Psoas muscle (tissue), 8 donors: ENCODE measurements at regions of chr4 and their contacts with region 1.

Region 1: DNA sequence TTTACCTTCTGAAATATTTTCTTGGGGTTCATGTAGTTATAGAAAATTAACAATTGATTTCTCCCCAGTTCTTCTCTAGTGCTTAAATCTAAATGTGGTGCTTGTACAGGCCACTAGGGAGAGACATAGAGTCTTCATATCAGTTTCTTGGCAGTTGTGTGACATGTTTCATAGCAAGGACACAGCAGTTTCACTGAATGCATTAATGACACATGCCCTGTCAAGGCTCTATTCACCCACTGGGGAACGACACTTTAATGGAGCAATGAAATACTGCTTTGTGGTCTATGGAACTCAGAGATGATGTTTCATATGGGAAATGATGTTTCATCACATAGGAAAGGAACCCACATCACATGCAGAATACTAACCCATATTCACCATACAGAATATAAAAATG is 2.8 kb downstream of the VEGFC start:
- DNase-seq: no peak
- ATAC-seq: peak; percentile 69 to 84 (median 78)
- H3K4me3 ChIP-seq: peak overlapping the region; percentile 82
- H3K27ac ChIP-seq: peak overlapping the region; percentile 83
- H3K4me1 ChIP-seq: peaks cover 8% of the 10 kb centered on the region
- H3K27me3 ChIP-seq: peaks cover 0 to 2% (median 0%) of the 10 kb centered on the region in 3 donors
- CTCF ChIP-seq: peak; percentile 66

Region 2: GRCh38 chr4:176383273-176384077 is 406.5 kb before region 1 on chr4:
- intact Hi-C with region 1: loop called in 1 of 2 experiments (anchors 5 kb)
- DNase-seq: no peak
- ATAC-seq: no peak
- H3K4me3 ChIP-seq: no peak overlapping the region
- H3K27ac ChIP-seq: no peak overlapping the region
- H3K4me1 ChIP-seq: no peaks in the 10 kb centered on the region
- H3K27me3 ChIP-seq: no peaks in the 10 kb centered on the region
- CTCF ChIP-seq: no peak

Region 3: DNA sequence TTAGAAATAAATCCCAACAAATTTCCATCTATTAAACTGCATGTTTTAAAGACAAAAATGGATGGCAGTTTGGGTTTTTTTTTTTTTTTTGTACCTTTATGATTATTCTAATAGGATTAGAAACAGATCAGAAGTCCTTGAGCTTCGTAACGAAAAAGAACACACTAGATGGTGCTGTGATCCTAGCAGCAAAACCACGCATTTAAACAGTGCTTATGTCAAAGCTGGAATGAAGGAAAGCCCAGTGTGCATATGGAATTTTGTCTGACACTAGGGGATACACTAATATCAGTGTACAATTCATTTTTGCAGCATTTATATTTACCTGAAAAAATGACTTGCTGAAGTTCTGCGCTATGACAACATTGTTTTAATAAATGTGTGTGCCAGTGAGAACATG is 226.4 kb before region 1 on chr4:
- intact Hi-C with region 1: loop called in 1 of 2 experiments (anchors 5 kb)
- DNase-seq: no peak
- ATAC-seq: no peak
- H3K4me3 ChIP-seq: no peak overlapping the region
- H3K27ac ChIP-seq: no peak overlapping the region
- H3K4me1 ChIP-seq: peaks cover 5% of the 10 kb centered on the region
- H3K27me3 ChIP-seq: no peaks in the 10 kb centered on the region
- CTCF ChIP-seq: peak; percentile 18

Region 4: DNA sequence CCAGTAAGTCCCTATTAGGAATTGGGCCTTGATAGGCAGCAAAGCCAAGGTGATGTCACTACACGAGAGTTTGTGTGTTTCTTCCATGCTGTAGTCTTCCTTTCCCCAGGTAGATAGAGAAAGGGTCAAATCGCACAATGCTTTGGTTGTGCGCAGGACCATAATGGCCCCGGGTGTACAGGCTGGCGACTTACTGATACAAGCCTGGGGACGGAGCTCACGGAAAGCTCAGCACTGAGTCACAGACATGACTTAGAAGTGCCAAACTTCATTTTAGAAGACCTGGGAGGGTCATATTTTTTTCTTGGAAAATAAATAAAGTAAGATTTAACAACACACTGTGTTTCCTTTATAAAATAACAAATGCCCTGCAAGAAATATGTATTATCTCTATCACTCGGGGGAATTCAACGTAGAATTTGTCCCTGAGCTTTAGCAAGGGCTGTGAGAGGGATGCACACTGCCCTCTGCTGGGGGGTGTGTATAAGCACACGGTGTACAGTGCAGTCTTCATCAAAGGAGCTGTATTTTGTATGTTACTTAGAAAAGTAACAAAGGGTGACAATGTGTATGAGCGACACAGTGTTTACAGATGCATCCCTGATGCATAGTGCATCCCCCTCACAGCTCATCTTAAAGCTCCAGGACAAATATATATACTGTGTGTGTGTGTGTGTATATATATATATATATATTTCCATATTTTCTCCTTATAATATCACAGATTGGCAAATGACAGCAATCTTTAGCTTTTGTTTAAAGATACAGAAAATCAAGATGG is 257.3 kb after region 1 on chr4:
- intact Hi-C with region 1: loop called in 1 of 2 experiments (anchors 5 kb)
- DNase-seq: peak; percentile 40 to 59
- ATAC-seq: peak; percentile 61 to 80 (median 76)
- H3K4me3 ChIP-seq: no peak overlapping the region
- H3K27ac ChIP-seq: no peak overlapping the region
- H3K4me1 ChIP-seq: no peaks in the 10 kb centered on the region
- H3K27me3 ChIP-seq: no peaks in the 10 kb centered on the region
- CTCF ChIP-seq: peak; percentile 80